BJ (cell line): ENCODE measurements at regions of chr11 and their contacts with region 1.

Region 1: DNA sequence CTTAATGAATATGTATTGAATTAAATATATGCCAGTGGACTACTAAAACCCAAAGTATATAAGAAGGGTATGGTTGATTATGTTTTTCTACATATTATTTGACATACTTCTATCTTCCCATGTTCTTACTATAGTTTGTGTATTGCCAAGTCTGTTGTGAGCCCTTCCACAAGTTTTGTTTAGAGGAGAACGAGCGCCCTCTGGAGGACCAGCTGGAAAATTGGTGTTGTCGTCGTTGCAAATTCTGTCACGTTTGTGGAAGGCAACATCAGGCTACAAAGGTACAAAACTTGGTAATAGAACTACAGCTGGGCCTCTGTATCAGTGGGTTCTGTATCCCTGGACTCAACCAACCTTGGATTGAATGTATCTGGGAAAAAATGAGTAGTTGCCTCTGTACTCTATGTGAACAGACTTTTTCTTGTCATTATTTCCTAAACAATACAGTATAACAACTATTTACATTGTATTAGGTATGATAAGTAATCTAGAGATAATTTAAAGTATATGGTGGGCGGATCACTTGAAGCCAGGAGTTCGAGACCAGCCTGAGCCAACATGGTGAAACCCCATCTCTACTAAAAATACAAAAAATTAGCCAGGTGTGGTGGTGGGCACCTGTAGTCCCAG is 38.7 kb upstream of the TTC36 start:
- DNase-seq: peak; percentile 18
- H3K4me3 ChIP-seq: no peak overlapping the region
- H3K27me3 ChIP-seq: no peaks in the 10 kb centered on the region
- CTCF ChIP-seq: peak; percentile 84

Region 2: DNA sequence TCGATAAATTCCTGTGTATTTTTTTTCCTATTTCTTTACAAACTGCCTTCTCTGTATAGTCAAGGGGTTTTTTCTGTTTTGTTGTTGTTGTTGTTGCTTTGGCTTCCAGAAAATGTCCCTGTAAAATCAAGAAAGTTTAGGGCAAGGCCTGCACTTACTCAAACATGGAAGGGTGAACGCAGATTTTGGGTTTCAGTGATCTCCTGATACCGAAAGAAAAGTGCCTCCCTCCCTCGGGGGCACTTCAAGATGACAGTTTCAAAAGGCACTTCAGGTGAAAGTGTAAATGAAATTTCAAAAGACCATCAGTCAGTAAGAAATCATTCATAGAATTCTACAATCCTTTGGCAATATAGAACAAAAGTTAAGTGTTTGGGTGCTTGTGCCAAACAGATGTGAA is 455.2 kb before region 1 on chr11:
- CTCF ChIA-PET with region 1: no interaction called
- POLR2A ChIA-PET with region 1: no interaction called
- DNase-seq: no peak
- H3K4me3 ChIP-seq: no peak overlapping the region
- H3K27me3 ChIP-seq: no peaks in the 10 kb centered on the region; the same call in 1 of the 2 replicates
- CTCF ChIP-seq: no peak

Region 3: GRCh38 chr11:118401151-118401878 is 87.3 kb before region 1 on chr11 and contains the start of gene ATP5MG:
- CTCF ChIA-PET with region 1: interaction called, 11 read pairs
- POLR2A ChIA-PET with region 1: no interaction called
- DNase-seq: peak; percentile 66
- H3K4me3 ChIP-seq: peak within 1 kb of the TSS; percentile 95
- H3K27me3 ChIP-seq: no peaks in the 10 kb centered on the region
- CTCF ChIP-seq: peak; percentile 23; the same call in 1 of the 2 replicates
- polyA plus RNA-seq, gene ATP5MG: 170 and 266 TPM in 2 replicates

Region 4: GRCh38 chr11:118471030-118471429 is 17.6 kb before region 1 on chr11:
- CTCF ChIA-PET with region 1: interaction called, 11 read pairs
- POLR2A ChIA-PET with region 1: no interaction called
- DNase-seq: no peak
- H3K4me3 ChIP-seq: no peak overlapping the region
- H3K27me3 ChIP-seq: no peaks in the 10 kb centered on the region
- CTCF ChIP-seq: no peak

Region 5: DNA sequence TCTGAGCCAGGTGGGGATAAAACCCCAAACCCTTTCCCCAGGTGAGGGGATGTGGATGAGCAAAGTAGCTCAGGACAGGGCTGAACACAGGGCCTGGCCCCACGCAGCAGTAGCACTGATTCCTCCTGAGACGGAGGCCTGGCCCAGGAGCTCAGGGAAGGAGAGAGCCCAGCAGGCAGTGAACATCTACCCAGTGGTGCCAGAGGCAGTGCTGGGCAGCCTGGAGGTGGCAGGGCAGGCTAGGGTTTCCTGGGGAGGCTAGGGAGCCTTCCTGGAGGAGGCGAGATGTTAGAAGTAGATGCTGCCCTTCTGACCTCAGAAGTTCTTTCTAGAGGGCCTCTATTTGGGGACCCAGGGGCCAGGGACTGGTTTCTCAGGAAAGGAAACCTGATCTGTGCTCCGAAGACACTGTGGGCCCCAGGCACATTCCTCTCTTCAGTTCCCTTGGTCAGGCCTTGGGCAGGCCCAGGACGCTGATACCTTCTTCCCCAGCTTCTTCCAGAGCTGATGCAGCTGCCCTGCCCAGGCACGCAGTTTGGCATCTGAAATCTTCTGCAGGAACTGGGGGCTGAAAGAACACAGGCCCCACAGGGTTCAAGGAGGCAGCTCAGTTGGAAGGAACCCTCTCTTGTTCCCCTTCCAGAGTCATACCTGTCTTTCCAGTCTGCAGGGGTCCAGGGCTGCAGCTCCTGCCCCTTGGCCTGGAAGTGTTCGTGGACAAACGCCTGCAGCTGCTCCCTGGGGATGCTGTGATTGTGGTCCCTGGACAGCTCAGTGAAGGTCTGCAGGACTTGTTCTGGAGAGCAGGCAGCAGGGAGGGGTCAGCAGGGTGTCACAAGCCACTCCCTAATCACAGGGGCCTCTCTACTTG is 174.0 kb after region 1 on chr11:
- CTCF ChIA-PET with region 1: no interaction called
- POLR2A ChIA-PET with region 1: no interaction called
- DNase-seq: no peak
- H3K4me3 ChIP-seq: no peak overlapping the region
- H3K27me3 ChIP-seq: no peaks in the 10 kb centered on the region
- CTCF ChIP-seq: no peak